ENCODE measurements at regions of chr1 and their contacts with region 1.

Region 1: GRCh38 chr1:168178638-168179437 is at the start of gene TIPRL:
- DNase-seq: peak; percentile 88 to 93
- ATAC-seq: peak; percentile 97
- H3K4me3 ChIP-seq: peak within 1 kb of the TSS; percentile 72 to 83 (median 74)
- H3K27ac ChIP-seq: peak within 1 kb of the TSS; percentile 85 to 91 (median 90)
- H3K4me1 ChIP-seq: peaks cover 9 to 10% of the 10 kb centered on the region in 2 donors
- H3K27me3 ChIP-seq: no peaks in the 10 kb centered on the region
- CTCF ChIP-seq: peak; percentile 35 to 86 (median 80)
- POLR2A ChIP-seq: peak; percentile 81 to 85
- total RNA-seq, gene TIPRL: 23.2 to 35.1 (median 27.1) TPM

Region 2: GRCh38 chr1:168225476-168226190 is 46.8 kb after region 1 on chr1 and contains the start of gene SFT2D2:
- in situ Hi-C with region 1: no loop called
- intact Hi-C with region 1: loop called (anchors 2 kb)
- DNase-seq: peak; percentile 43 to 66
- ATAC-seq: peak; percentile 92 to 93
- H3K4me3 ChIP-seq: peak within 1 kb of the TSS; percentile 86 to 96 (median 90)
- H3K27ac ChIP-seq: peak within 1 kb of the TSS; percentile 73 to 75 (median 74)
- H3K4me1 ChIP-seq: peaks cover 14 to 31% of the 10 kb centered on the region in 2 donors
- H3K27me3 ChIP-seq: no peaks in the 10 kb centered on the region
- CTCF ChIP-seq: no peak
- POLR2A ChIP-seq: peak; percentile 43 to 55
- total RNA-seq, gene SFT2D2: 10.2 to 15.8 (median 11.7) TPM

Measured in gastrocnemius medialis (tissue), 4 donors.